OCI-LY7 (cell line): ENCODE measurements at regions of chr20 and their contacts with region 1.

Region 1: DNA sequence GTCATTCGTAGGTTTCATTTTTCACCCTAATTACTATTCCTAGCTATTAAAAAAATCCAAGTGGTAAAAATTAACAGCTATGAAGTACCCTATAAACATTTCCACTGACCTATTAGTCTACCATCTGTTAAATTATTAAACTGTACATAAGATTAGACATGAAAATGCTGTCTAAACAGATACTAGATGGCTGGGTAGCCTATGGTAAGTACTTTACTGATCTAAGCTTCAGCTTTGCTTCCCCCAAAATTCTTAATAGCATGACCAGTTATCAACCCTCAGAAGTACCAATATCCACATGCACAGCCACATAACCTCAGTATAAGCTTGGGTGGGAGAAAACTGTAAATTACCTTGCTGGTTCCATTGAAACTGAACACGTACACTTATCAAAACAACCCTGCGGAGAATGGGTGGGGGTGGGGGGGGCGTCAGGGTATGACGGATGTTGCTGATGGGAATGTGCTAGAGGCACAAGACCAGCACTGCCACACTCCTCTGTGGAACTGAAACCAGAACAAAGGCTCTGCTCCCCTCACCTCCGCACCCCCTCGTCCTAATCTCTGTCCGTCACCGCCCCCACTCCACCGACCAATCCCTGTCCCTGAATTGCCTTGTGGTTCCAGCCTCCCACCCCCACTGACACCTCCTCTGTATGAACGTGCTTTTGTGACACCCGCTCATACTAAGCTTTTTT is 45.3 kb downstream of the B4GALT5 start:
- DNase-seq: peak; percentile 74
- H3K4me3 ChIP-seq: peak overlapping the region; percentile 64
- H3K27ac ChIP-seq: peak overlapping the region; percentile 61
- H3K4me1 ChIP-seq: peaks cover 57% of the 10 kb centered on the region
- CTCF ChIP-seq: no peak

Region 2: GRCh38 chr20:49636447-49636846 is 31.9 kb before region 1 on chr20:
- CTCF ChIA-PET with region 1: no interaction called
- POLR2A ChIA-PET with region 1: interaction called, 19 read pairs
- intact Hi-C with region 1: loop called (anchors 2 kb)
- DNase-seq: peak; percentile 60
- H3K4me3 ChIP-seq: peak overlapping the region; percentile 37
- H3K27ac ChIP-seq: peak overlapping the region; percentile 91
- H3K4me1 ChIP-seq: peaks cover 67% of the 10 kb centered on the region
- CTCF ChIP-seq: no peak

Region 3: GRCh38 chr20:50625986-50626677 is 957.8 kb after region 1 on chr20:
- CTCF ChIA-PET with region 1: no interaction called
- POLR2A ChIA-PET with region 1: no interaction called
- intact Hi-C with region 1: no loop called
- DNase-seq: peak; percentile 61
- H3K4me3 ChIP-seq: no peak overlapping the region
- H3K27ac ChIP-seq: no peak overlapping the region
- H3K4me1 ChIP-seq: peaks cover 36% of the 10 kb centered on the region
- CTCF ChIP-seq: peak; percentile 76